Natural killer cell (primary cell): ENCODE measurements at regions of chr14 and their contacts with region 1.

Region 1: GRCh38 chr14:23095196-23096108 is at the start of gene C14orf119:
- DNase-seq: peak in 1 of 2 donors; percentile 100
- ATAC-seq: peak; percentile 86 to 97 (median 86)
- H3K4me3 ChIP-seq: peak within 1 kb of the TSS; percentile 68
- H3K4me3 Mint-ChIP-seq: no peak within 1 kb of the TSS
- H3K27ac ChIP-seq: peak within 1 kb of the TSS; percentile 92
- H3K27ac Mint-ChIP-seq: no peak within 1 kb of the TSS
- H3K4me1 ChIP-seq: peaks cover 15% of the 10 kb centered on the region
- H3K4me1 Mint-ChIP-seq: peaks cover 22 to 28% of the 10 kb centered on the region in 2 donors
- H3K27me3 ChIP-seq: no peaks in the 10 kb centered on the region
- H3K27me3 Mint-ChIP-seq: no peaks in the 10 kb centered on the region
- CTCF ChIP-seq: no peak
- total RNA-seq, gene C14orf119: 10.6 to 19.0 (median 14.7) TPM

Region 2: GRCh38 chr14:22589096-22589839 is 506.2 kb before region 1 on chr14 and contains the start of gene DAD1:
- intact Hi-C with region 1: loop called (anchors 1 kb)
- DNase-seq: peak; percentile 100
- ATAC-seq: peak; percentile 86 to 96 (median 90)
- H3K4me3 ChIP-seq: peak within 1 kb of the TSS; percentile 80
- H3K4me3 Mint-ChIP-seq: peak within 1 kb of the TSS; percentile 90
- H3K27ac ChIP-seq: peak within 1 kb of the TSS; percentile 97
- H3K27ac Mint-ChIP-seq: peak within 1 kb of the TSS; percentile 97 to 99
- H3K4me1 ChIP-seq: peaks cover 19% of the 10 kb centered on the region
- H3K4me1 Mint-ChIP-seq: peaks cover 45 to 47% of the 10 kb centered on the region in 2 donors
- H3K27me3 ChIP-seq: no peaks in the 10 kb centered on the region
- H3K27me3 Mint-ChIP-seq: peaks cover 13 to 17% of the 10 kb centered on the region in 2 donors
- CTCF ChIP-seq: no peak
- total RNA-seq, gene DAD1: 79.5 to 97.9 (median 92.8) TPM

Region 3: DNA sequence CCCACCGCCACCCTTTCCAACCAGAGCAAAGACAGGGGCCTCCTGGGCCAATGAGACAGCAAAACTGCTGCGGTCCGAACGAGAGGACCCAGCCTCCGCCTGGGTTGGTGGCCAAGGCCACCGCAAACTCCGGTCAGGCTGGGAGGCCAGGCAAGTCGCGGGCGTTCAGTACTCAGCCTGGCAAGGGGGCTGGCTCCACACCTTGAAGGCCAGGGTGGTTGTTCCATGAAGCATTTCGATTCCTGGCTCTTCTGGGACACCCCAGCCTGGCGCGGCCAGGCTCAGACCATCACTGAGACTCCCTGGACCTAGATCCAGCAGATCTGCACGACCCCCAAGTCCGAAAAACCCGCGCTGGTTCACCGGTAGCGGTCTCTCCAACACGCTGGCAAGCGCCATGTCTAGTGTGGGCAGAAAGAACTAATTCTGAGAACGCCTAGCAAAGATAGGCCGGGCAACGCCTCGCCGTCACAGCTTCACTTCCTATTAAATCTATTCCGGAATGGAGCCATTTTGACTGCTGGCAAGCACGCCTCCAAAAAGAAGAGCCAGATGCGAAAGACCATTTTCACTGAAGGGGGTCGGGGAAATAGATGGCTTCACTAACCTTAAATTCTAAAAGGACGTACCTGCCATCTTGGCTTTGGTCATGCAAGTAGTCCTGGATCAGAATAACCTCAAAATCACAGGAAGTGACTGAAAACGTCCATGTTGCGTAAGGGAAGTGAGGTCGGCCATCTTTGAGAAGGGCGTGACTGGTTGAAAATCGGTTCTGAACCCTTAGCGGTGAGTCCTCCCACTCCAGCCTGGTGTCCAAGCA is 60.8 kb before region 1 on chr14 and contains the start of gene PSMB5:
- intact Hi-C with region 1: loop called (anchors 2 kb)
- DNase-seq: peak; percentile 76 to 96
- ATAC-seq: peak; percentile 93 to 98 (median 94)
- H3K4me3 ChIP-seq: peak within 1 kb of the TSS; percentile 74
- H3K4me3 Mint-ChIP-seq: peak within 1 kb of the TSS; percentile 90
- H3K27ac ChIP-seq: peak within 1 kb of the TSS; percentile 93
- H3K27ac Mint-ChIP-seq: peak within 1 kb of the TSS; percentile 98 to 100
- H3K4me1 ChIP-seq: peaks cover 15% of the 10 kb centered on the region
- H3K4me1 Mint-ChIP-seq: peaks cover 25 to 32% of the 10 kb centered on the region in 2 donors
- H3K27me3 ChIP-seq: no peaks in the 10 kb centered on the region
- H3K27me3 Mint-ChIP-seq: no peaks in the 10 kb centered on the region
- CTCF ChIP-seq: no peak
- total RNA-seq, gene PSMB5: 15.7 to 19.1 (median 16.4) TPM

Region 4: DNA sequence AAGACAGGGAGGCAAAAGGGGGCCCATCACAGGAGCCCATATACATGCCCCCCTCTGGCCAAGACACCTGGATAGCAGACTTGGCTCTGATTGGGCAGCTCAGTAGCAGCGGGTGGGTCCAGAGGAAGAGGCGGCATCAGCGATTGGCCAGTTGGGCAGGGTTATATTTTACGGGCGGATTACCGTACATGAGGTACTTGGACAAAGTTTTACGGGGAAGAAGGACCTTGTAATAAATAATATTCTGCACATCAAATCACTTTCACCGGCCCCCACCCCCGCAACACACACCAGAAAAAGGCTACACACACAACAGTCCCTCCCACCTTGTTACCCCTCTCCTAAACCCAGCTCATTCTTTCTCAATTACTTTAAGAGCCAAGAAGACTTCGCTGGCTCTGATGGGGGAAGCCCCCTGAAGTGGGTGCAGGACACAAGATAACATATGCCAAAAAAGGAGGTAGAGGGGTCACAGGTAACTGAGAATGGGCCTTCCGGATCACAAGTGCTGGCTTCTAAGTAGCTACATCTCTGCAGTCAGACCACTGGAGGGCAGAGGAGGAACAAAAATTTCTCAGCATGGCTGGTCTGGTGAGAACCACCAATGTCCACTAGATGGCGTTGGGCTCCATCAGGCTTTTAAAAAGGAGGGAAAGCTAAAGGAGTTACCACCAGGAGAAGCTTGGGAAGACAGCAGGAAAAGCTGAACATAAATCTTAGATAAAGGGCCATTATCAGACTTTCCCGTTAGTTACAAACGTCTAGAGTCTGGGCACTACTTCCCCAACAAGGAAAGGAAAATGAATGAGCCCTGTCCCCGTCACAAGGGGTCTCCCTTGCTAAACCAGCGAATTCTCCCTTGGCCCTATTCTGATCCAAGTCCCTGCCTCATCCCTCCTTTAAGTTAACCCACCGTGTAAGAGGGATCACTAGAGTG is 26.7 kb before region 1 on chr14:
- intact Hi-C with region 1: loop called (anchors 2 kb)
- DNase-seq: peak; percentile 55 to 91
- ATAC-seq: peak; percentile 82 to 92 (median 84)
- H3K4me3 ChIP-seq: no peak overlapping the region
- H3K4me3 Mint-ChIP-seq: peak overlapping the region; percentile 37
- H3K27ac ChIP-seq: no peak overlapping the region
- H3K27ac Mint-ChIP-seq: peak overlapping the region; percentile 72 to 78
- H3K4me1 ChIP-seq: peaks cover 29% of the 10 kb centered on the region
- H3K4me1 Mint-ChIP-seq: peaks cover 27 to 41% of the 10 kb centered on the region in 2 donors
- H3K27me3 ChIP-seq: no peaks in the 10 kb centered on the region
- H3K27me3 Mint-ChIP-seq: no peaks in the 10 kb centered on the region
- CTCF ChIP-seq: peak; percentile 99

Region 5: GRCh38 chr14:23154964-23155587 is 59.6 kb after region 1 on chr14:
- intact Hi-C with region 1: no loop called
- DNase-seq: peak in 1 of 2 donors; percentile 19
- ATAC-seq: no peak
- H3K4me3 ChIP-seq: no peak overlapping the region
- H3K4me3 Mint-ChIP-seq: no peak overlapping the region
- H3K27ac ChIP-seq: no peak overlapping the region
- H3K27ac Mint-ChIP-seq: no peak overlapping the region
- H3K4me1 ChIP-seq: no peaks in the 10 kb centered on the region
- H3K4me1 Mint-ChIP-seq: no peaks in the 10 kb centered on the region
- H3K27me3 ChIP-seq: no peaks in the 10 kb centered on the region
- H3K27me3 Mint-ChIP-seq: peaks cover 3 to 11% of the 10 kb centered on the region in 2 donors
- CTCF ChIP-seq: no peak

Region 6: DNA sequence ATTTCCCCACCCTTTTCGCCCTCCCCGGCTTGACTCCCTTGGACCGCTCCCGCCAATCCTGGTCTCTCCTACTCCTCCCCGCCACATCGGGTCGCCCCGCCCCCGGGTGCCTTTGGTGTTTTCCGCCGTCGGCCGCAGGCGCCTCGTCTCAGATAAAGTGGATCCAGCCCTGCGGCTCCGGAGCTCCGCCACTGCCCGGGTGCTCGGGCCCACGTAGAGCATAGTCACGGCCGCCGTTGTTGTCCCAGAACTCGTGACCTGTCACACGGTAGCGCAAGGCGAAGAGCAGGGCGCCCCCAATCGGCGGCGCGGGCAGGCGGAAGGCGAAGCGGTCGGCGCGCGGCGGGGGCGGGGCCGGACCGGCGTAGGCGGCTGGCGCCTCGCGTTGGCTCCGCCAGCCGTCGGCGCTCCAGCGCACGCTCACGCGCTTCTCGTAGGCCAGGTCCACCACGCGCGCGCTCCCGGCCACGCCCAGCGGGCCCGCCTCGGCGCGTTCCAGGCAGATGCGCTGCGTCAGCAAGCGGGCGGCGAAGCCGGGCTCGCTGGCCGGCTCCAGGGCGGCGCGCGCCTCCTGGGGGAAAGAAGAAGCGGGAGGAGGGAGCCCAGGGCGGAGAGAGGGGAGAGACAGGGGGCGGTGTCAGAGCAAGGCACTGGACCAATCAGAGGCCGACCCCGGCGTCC is 206.0 kb after region 1 on chr14:
- intact Hi-C with region 1: loop called (anchors 10 kb)
- DNase-seq: peak; percentile 97 to 99
- ATAC-seq: peak; percentile 79 to 93 (median 82)
- H3K4me3 ChIP-seq: peak overlapping the region; percentile 77
- H3K4me3 Mint-ChIP-seq: peak overlapping the region; percentile 92
- H3K27ac ChIP-seq: peak overlapping the region; percentile 94
- H3K27ac Mint-ChIP-seq: peak overlapping the region; percentile 92 to 99
- H3K4me1 ChIP-seq: peaks cover 29% of the 10 kb centered on the region
- H3K4me1 Mint-ChIP-seq: peaks cover 19 to 40% of the 10 kb centered on the region in 2 donors
- H3K27me3 ChIP-seq: no peaks in the 10 kb centered on the region
- H3K27me3 Mint-ChIP-seq: no peaks in the 10 kb centered on the region
- CTCF ChIP-seq: peak; percentile 69

Region 7: DNA sequence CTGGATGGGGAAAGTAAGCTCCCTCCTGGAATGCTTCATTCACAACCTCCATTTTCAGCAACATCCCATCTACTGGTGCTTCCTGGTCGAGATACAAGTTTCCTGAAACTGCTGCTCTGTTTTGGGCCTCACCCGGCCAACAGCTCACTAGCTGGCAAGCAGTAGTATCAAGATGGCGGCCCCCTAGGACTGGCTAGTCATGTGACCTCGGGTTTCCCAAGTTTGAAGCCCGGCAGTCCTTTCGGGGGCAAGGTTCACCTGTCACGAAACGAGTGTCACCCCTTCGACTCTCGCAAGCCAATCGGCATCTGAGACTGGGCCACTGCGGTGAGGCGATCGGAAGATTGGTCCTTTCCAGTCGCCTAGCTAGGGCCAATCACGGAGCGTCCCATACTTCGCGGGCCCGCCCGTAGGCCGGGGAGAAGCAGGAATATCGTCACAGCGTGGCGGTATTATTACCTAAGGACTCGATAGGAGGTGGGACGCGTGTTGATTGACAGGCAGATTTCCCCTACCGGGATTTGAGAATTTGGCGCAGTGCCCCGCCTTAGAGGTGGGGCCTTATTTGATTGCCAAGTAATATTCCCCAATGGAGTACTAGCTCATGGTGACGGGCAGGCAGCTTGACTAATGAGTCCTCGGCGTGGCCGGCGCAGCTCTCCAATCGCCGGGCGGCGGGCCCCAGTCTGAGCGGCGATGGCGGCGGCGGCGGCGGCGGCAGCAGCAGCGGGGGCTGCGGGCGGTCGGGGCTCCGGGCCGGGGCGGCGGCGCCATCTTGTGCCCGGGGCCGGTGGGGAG is 225.5 kb after region 1 on chr14 and contains the start of gene PABPN1:
- intact Hi-C with region 1: loop called (anchors 1 kb)
- DNase-seq: peak; percentile 95 to 99
- ATAC-seq: peak; percentile 83 to 94 (median 85)
- H3K4me3 ChIP-seq: peak within 1 kb of the TSS; percentile 66
- H3K4me3 Mint-ChIP-seq: peak within 1 kb of the TSS; percentile 92
- H3K27ac ChIP-seq: peak within 1 kb of the TSS; percentile 91
- H3K27ac Mint-ChIP-seq: peak within 1 kb of the TSS; percentile 95 to 96
- H3K4me1 ChIP-seq: peaks cover 23% of the 10 kb centered on the region
- H3K4me1 Mint-ChIP-seq: peaks cover 31 to 35% of the 10 kb centered on the region in 2 donors
- H3K27me3 ChIP-seq: no peaks in the 10 kb centered on the region
- H3K27me3 Mint-ChIP-seq: no peaks in the 10 kb centered on the region
- CTCF ChIP-seq: no peak
- total RNA-seq, gene PABPN1: 226 to 261 (median 238) TPM